Colonic mucosa (tissue), 4 donors: ENCODE measurements at regions of chr6 and their contacts with region 1.

Region 1: GRCh38 chr6:11172501-11173332 is 59.8 kb downstream of the NEDD9 start:
- DNase-seq: peak; percentile 84
- H3K4me3 ChIP-seq: no peak overlapping the region
- H3K27ac ChIP-seq: no peak overlapping the region
- H3K4me1 ChIP-seq: no peaks in the 10 kb centered on the region
- H3K27me3 ChIP-seq: no peaks in the 10 kb centered on the region
- CTCF ChIP-seq: peak; percentile 90

Region 2: GRCh38 chr6:11445146-11445545 is 272.4 kb after region 1 on chr6:
- intact Hi-C with region 1: loop called (anchors 10 kb)
- DNase-seq: no peak
- H3K4me3 ChIP-seq: no peak overlapping the region
- H3K27ac ChIP-seq: no peak overlapping the region
- H3K4me1 ChIP-seq: no peaks in the 10 kb centered on the region
- H3K27me3 ChIP-seq: no peaks in the 10 kb centered on the region
- CTCF ChIP-seq: no peak